K562 (cell line): ENCODE measurements at regions of chr19 and their contacts with region 1.

Region 1: DNA sequence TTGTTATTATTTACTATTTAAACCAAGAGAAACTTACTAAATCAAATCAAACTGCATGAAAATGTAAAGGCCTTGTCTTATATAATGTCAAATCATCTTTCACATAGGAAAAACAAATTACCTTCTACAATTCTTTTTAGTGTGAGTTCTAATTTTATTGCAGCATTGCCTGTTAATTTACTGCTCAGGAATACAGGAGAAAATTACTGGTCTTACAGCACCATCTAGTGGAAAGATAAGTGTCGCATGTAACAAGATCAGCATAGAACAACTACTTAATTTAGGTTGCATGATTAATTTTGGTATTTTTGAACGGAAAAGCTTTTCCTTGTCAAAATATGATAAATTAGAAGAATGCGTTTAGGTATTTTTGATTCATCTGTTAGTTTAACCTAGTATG is 502.7 kb downstream of the UQCRFS1 start:
- DNase-seq: peak; percentile 42 to 74 (median 50)
- ATAC-seq: peak; percentile 89
- H3K4me3 ChIP-seq: no peak overlapping the region
- H3K27ac ChIP-seq: no peak overlapping the region
- H3K4me1 ChIP-seq: no peaks in the 10 kb centered on the region
- H3K27me3 ChIP-seq: no peaks in the 10 kb centered on the region
- CTCF ChIP-seq: peak; percentile 35 to 78 (median 45); a peak in 4 of 6 replicates
- EP300 ChIP-seq: no peak
- POLR2A ChIP-seq: no peak
- RAD21 ChIP-seq: peak; percentile 85 to 91

Region 2: DNA sequence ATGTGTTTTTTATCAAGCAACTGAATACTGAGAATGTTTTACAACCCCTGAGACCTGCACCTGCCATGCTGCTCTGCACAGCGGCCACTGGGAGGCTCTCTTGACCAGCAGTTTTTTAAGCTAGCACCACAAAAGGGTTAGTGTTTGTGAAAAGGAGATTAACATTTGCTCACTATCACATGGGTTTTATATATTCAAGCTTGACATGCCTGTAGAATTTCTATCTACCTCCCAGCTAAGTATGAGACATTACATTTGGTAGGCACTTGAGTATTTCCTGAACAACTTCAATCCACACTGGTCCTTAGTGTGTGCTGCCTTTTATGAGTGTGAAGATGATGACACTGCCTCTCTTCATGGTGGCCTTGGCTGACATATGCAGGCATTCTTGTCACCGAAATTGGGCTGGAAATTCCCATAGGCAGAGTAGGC is 736.2 kb before region 1 on chr19:
- CTCF ChIA-PET with region 1: no interaction called
- POLR2A ChIA-PET with region 1: no interaction called
- in situ Hi-C with region 1: no loop called
- intact Hi-C with region 1: loop called (anchors 10 kb)
- DNase-seq: peak; percentile 11 to 26 (median 25)
- ATAC-seq: peak; percentile 73; the same call in 2 of the 3 replicates
- H3K4me3 ChIP-seq: no peak overlapping the region
- H3K27ac ChIP-seq: no peak overlapping the region
- H3K4me1 ChIP-seq: no peaks in the 10 kb centered on the region
- H3K27me3 ChIP-seq: no peaks in the 10 kb centered on the region
- CTCF ChIP-seq: peak; percentile 49 to 63 (median 63)
- EP300 ChIP-seq: no peak
- POLR2A ChIP-seq: no peak
- RAD21 ChIP-seq: peak; percentile 53 to 68

Region 3: GRCh38 chr19:28242297-28242927 is 467.9 kb before region 1 on chr19:
- CTCF ChIA-PET with region 1: interaction called, 5 read pairs
- POLR2A ChIA-PET with region 1: no interaction called
- in situ Hi-C with region 1: loop called (anchors 25 kb)
- intact Hi-C with region 1: loop called (anchors 1 kb)
- DNase-seq: peak; percentile 61 to 77 (median 71)
- ATAC-seq: peak; percentile 75
- H3K4me3 ChIP-seq: no peak overlapping the region
- H3K27ac ChIP-seq: no peak overlapping the region
- H3K4me1 ChIP-seq: no peaks in the 10 kb centered on the region
- H3K27me3 ChIP-seq: no peaks in the 10 kb centered on the region
- CTCF ChIP-seq: peak; percentile 60 to 74 (median 64)
- EP300 ChIP-seq: no peak
- POLR2A ChIP-seq: no peak
- RAD21 ChIP-seq: peak in 1 of 2 experiments; percentile 65; a peak in 2 of 4 replicates

Region 4: GRCh38 chr19:28349604-28350003 is 360.7 kb before region 1 on chr19:
- CTCF ChIA-PET with region 1: no interaction called
- POLR2A ChIA-PET with region 1: no interaction called
- in situ Hi-C with region 1: no loop called
- intact Hi-C with region 1: loop called (anchors 10 kb)
- DNase-seq: no peak
- ATAC-seq: no peak
- H3K4me3 ChIP-seq: no peak overlapping the region
- H3K27ac ChIP-seq: no peak overlapping the region
- H3K4me1 ChIP-seq: no peaks in the 10 kb centered on the region; a peak in 1 of 5 replicates
- H3K27me3 ChIP-seq: no peaks in the 10 kb centered on the region; a peak in 1 of 5 replicates
- CTCF ChIP-seq: no peak
- EP300 ChIP-seq: no peak
- POLR2A ChIP-seq: no peak
- RAD21 ChIP-seq: no peak

Region 5: GRCh38 chr19:28466107-28467045 is 243.9 kb before region 1 on chr19:
- CTCF ChIA-PET with region 1: interaction called, 18 read pairs
- POLR2A ChIA-PET with region 1: no interaction called
- in situ Hi-C with region 1: loop called (anchors 5 kb)
- intact Hi-C with region 1: loop called (anchors 5 kb)
- DNase-seq: peak; percentile 66 to 81 (median 71)
- ATAC-seq: peak; percentile 73
- H3K4me3 ChIP-seq: no peak overlapping the region
- H3K27ac ChIP-seq: peak overlapping the region; percentile 6; the same call in 1 of the 3 replicates
- H3K4me1 ChIP-seq: peaks cover 2 to 16% of the 10 kb centered on the region in 2 experiments; a peak in 3 of 5 replicates
- H3K27me3 ChIP-seq: no peaks in the 10 kb centered on the region
- CTCF ChIP-seq: peak; percentile 73 to 84 (median 80)
- EP300 ChIP-seq: no peak
- POLR2A ChIP-seq: no peak
- RAD21 ChIP-seq: peak; percentile 65 to 77

Region 6: GRCh38 chr19:28847468-28847867 is 137.2 kb after region 1 on chr19:
- CTCF ChIA-PET with region 1: no interaction called
- POLR2A ChIA-PET with region 1: no interaction called
- in situ Hi-C with region 1: no loop called
- intact Hi-C with region 1: no loop called
- DNase-seq: no peak
- ATAC-seq: no peak
- H3K4me3 ChIP-seq: no peak overlapping the region
- H3K27ac ChIP-seq: no peak overlapping the region
- H3K4me1 ChIP-seq: no peaks in the 10 kb centered on the region
- H3K27me3 ChIP-seq: peaks cover 0 to 5% of the 10 kb centered on the region in 2 experiments; a peak in 1 of 5 replicates
- CTCF ChIP-seq: no peak
- EP300 ChIP-seq: no peak
- POLR2A ChIP-seq: no peak
- RAD21 ChIP-seq: no peak

Region 7: DNA sequence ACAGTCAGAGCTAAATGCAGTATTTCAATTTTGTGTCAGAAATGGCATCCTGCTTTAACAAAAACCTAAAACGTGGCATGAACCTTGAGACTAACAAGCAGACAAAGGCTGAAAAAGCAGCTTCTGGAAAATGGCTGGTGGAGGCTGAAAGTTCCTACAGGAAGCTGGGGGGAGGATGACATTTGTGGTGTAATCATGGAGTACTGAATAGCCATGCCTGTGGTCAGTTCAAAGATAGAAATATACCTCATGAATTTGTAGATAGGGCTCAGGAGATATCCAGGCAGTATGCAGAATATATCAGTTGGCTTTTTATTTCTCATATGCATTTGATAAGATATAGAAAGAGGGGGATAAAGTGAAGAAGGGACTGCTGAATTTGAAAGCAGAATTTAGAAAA is 320.9 kb after region 1 on chr19:
- CTCF ChIA-PET with region 1: no interaction called
- POLR2A ChIA-PET with region 1: no interaction called
- in situ Hi-C with region 1: no loop called
- intact Hi-C with region 1: no loop called
- DNase-seq: no peak
- ATAC-seq: no peak
- H3K4me3 ChIP-seq: no peak overlapping the region
- H3K27ac ChIP-seq: no peak overlapping the region
- H3K4me1 ChIP-seq: no peaks in the 10 kb centered on the region; a peak in 1 of 5 replicates
- H3K27me3 ChIP-seq: peaks cover 5 to 20% of the 10 kb centered on the region in 2 experiments; a peak in 3 of 5 replicates
- CTCF ChIP-seq: no peak
- EP300 ChIP-seq: no peak
- POLR2A ChIP-seq: no peak
- RAD21 ChIP-seq: no peak